ENCODE measurements at regions of chr2 and their contacts with region 1.

Region 1: DNA sequence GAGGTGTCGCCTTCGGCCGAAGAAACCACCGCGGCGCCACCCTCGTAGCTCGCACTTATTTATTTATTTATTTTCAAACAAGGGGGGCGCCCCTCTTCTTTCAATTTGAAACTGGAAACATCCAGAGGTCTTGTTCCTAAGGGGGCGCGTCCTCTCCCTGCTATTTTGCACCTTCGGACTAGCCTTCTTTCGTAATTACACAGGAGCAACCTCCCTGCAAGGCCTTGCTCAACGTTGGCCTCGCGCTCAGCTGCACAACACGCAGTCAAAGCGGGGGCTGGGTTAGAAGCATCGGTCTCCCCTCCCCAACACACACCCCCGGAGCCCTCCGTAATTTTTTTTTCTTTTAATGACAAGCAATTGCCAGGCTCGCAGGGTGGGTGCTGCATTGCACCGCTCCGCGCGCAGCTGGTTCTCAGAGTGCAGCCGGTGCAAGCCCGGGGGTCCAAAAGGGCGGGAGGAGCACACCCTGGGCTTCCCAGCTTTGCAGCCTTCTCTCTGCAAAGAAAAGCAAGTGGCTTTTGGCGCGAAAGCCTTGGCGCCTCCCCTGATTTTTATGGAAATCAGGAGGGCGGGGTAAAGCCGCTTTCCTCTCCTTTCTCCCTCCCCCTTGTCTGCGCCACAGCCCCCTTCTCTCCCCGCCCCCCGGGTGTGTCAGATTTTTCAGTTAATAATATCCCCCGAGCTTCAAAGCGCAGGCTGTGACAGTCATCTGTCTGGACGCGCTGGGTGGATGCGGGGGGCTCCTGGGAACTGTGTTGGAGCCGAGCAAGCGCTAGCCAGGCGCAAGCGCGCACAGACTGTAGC is at the start of gene MYCN:
- DNase-seq: peak; percentile 70 to 82
- H3K4me3 ChIP-seq: peak within 1 kb of the TSS; percentile 10 to 51 (median 38)
- H3K27ac ChIP-seq: peak within 1 kb of the TSS in 2 of 3 donors; percentile 2 to 42
- H3K4me1 ChIP-seq: peaks cover 17 to 37% of the 10 kb centered on the region in 2 donors
- H3K27me3 ChIP-seq: no peaks in the 10 kb centered on the region
- CTCF ChIP-seq: peak in 3 of 6 experiments; percentile 62 to 86 (median 80)
- POLR2A ChIP-seq: peak in 1 of 2 donors; percentile 56
- total RNA-seq, gene MYCN: 5.9 to 13.3 (median 10.1) TPM

Region 2: DNA sequence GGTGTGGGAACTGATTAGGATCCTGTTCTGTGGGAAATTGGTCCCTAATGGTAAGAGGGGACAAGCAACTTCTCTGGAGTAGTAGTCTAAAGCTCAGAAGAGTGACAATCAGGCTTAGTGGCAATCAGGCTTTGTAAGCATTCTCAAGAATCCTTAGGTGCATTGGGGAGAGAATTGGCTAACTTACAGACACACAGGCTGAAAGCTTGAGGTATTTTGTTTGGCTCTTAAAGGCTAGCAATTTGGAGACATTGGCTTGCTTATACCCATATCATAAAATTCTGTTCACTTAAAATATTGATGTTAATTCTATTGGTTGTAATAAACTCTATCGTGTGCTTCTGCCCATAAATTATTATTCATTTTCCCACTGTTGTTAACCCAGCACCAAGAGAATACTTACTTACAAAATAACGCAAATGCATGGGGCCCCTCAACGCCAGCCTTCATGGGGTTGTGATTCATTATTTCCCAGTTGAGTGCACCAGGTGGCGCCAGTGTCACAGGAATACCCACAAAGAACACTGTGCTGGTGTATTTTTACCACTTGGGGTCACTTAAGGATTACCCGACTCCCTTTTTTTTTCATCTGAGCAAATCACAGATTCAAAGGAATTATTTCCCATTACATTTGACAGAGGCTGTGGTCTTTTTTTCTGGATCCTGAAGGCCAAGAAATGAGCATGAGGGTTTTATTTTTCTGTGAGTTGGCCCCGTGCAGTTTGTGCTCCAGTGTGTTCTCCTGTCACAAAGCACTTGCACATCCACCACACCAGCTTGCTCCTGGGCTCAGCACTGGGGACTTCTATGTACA is 302.9 kb before region 1 on chr2:
- intact Hi-C with region 1: loop called (anchors 5 kb)
- DNase-seq: peak; percentile 82 to 84
- H3K4me3 ChIP-seq: no peak overlapping the region
- H3K27ac ChIP-seq: peak overlapping the region; percentile 42 to 65 (median 43)
- H3K4me1 ChIP-seq: peaks cover 18 to 38% of the 10 kb centered on the region in 2 donors
- H3K27me3 ChIP-seq: no peaks in the 10 kb centered on the region
- CTCF ChIP-seq: peak; percentile 64 to 100 (median 94)
- POLR2A ChIP-seq: no peak

Region 3: GRCh38 chr2:16012619-16013358 is 72.7 kb after region 1 on chr2:
- intact Hi-C with region 1: loop called (anchors 10 kb)
- DNase-seq: peak; percentile 86
- H3K4me3 ChIP-seq: no peak overlapping the region
- H3K27ac ChIP-seq: peak overlapping the region in 2 of 3 donors; percentile 48 to 58
- H3K4me1 ChIP-seq: peaks cover 24 to 28% of the 10 kb centered on the region in 2 donors
- H3K27me3 ChIP-seq: no peaks in the 10 kb centered on the region
- CTCF ChIP-seq: peak in 1 of 6 experiments; percentile 22
- POLR2A ChIP-seq: no peak

Region 4: GRCh38 chr2:16218625-16219024 is 278.6 kb after region 1 on chr2:
- intact Hi-C with region 1: loop called (anchors 10 kb)
- DNase-seq: peak; percentile 55 to 57
- H3K4me3 ChIP-seq: no peak overlapping the region
- H3K27ac ChIP-seq: no peak overlapping the region
- H3K4me1 ChIP-seq: no peaks in the 10 kb centered on the region
- H3K27me3 ChIP-seq: no peaks in the 10 kb centered on the region
- CTCF ChIP-seq: peak in 4 of 6 experiments; percentile 4 to 50 (median 44)
- POLR2A ChIP-seq: no peak

Region 5: GRCh38 chr2:16281451-16282336 is 341.6 kb after region 1 on chr2:
- intact Hi-C with region 1: loop called (anchors 5 kb)
- DNase-seq: peak; percentile 48 to 50
- H3K4me3 ChIP-seq: no peak overlapping the region
- H3K27ac ChIP-seq: no peak overlapping the region
- H3K4me1 ChIP-seq: no peaks in the 10 kb centered on the region
- H3K27me3 ChIP-seq: no peaks in the 10 kb centered on the region
- CTCF ChIP-seq: peak in 5 of 6 experiments; percentile 31 to 63 (median 61)
- POLR2A ChIP-seq: no peak

Region 6: GRCh38 chr2:16507655-16508489 is 567.8 kb after region 1 on chr2:
- intact Hi-C with region 1: loop called (anchors 10 kb)
- DNase-seq: peak; percentile 54 to 64
- H3K4me3 ChIP-seq: peak overlapping the region in 1 of 3 donors; percentile 23
- H3K27ac ChIP-seq: no peak overlapping the region
- H3K4me1 ChIP-seq: peaks cover 0 to 6% of the 10 kb centered on the region in 2 donors
- H3K27me3 ChIP-seq: no peaks in the 10 kb centered on the region
- CTCF ChIP-seq: peak; percentile 26 to 91 (median 56)
- POLR2A ChIP-seq: no peak